H1 (cell line): ENCODE measurements at regions of chr1 and their contacts with region 1.

Region 1: DNA sequence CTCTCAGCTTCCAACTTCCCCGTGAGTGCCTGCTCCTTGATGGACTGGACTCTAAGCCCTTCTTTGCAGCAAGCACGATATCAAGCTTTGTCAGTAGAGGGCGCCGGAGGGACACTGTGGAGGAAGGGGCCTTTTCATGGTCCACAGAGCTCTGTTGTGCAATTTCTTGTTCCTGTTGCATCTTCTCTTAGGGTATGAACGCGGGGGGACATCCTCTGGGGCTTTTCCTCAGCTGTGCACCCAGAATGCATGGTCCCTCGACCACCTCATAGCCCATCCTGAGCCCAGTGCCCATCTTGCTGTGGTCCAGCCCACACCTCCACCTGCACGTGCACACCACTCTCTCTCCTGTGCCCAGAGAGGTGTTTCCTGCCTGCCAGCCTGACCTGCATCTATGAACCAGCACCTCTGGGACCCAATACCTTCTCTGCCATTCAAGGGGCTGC is 556.8 kb downstream of the PTPRU start:
- DNase-seq: peak; percentile 62 to 98
- H3K4me3 ChIP-seq: no peak overlapping the region
- H3K27ac ChIP-seq: peak overlapping the region; percentile 48
- H3K4me1 ChIP-seq: no peaks in the 10 kb centered on the region; a peak in 2 of 7 replicates
- H3K27me3 ChIP-seq: no peaks in the 10 kb centered on the region
- CTCF ChIP-seq: peak; percentile 79 to 94 (median 93)
- EP300 ChIP-seq: no peak
- POLR2A ChIP-seq: no peak
- RAD21 ChIP-seq: peak; percentile 96 to 97

Region 2: DNA sequence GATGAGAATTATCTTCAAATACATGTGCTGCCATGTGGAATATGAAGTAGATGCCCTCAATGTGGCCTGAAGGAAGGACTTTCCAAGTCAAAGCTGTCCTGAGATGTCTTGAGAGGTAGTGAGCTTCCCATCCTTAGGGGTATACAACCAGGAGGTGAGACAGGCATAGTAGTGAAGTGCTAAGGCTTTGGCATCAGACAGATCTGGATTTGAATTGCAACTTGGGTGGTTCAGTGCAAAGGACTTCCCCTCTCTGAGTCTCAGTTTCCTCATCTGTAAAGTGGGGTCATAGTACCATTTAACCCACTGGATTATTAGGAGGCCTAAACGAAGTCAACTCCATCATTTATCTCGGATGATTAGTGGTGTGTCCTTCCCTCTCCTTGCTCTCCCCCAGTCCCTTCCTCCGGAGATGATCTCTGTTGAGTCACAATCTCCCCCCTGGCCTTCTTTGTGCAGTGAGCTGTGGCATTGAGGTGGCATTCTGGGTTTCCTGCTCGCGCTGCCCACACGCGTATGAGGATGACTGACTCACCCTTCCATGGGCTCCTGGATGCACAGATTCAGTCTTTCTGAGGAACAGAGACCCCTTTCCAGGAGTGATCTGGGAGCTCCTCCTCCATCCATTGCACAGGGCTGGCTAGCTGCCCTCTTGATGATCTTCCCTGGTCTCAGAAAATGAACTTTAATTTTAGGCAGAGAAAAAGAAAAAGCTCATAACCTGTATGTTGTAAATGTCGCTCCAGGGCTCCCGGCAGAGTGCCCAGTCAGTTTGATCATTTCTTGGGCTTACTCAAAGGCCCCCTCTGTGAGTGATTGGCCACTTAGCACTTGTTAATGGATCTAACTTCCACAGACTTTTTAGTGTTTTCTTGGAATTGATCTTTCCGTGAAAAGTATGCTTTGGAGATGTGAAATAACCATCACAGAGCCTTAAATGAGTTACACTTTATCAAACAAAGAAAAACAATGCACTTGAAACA is 202.2 kb before region 1 on chr1:
- CTCF ChIA-PET with region 1: no interaction called
- POLR2A ChIA-PET with region 1: no interaction called
- DNase-seq: no peak
- H3K4me3 ChIP-seq: no peak overlapping the region
- H3K27ac ChIP-seq: no peak overlapping the region
- H3K4me1 ChIP-seq: no peaks in the 10 kb centered on the region; a peak in 1 of 7 replicates
- H3K27me3 ChIP-seq: no peaks in the 10 kb centered on the region
- CTCF ChIP-seq: no peak
- EP300 ChIP-seq: no peak
- POLR2A ChIP-seq: no peak
- RAD21 ChIP-seq: no peak

Region 3: GRCh38 chr1:29805141-29805625 is 12.1 kb after region 1 on chr1:
- CTCF ChIA-PET with region 1: interaction called, 10 read pairs
- POLR2A ChIA-PET with region 1: no interaction called
- DNase-seq: peak in 1 of 2 experiments; percentile 39
- H3K4me3 ChIP-seq: no peak overlapping the region
- H3K27ac ChIP-seq: no peak overlapping the region; the same call in 1 of the 2 replicates
- H3K4me1 ChIP-seq: peaks cover 0 to 6% (median 2%) of the 10 kb centered on the region in 4 experiments; a peak in 3 of 7 replicates
- H3K27me3 ChIP-seq: no peaks in the 10 kb centered on the region
- CTCF ChIP-seq: peak; percentile 5 to 30 (median 15)
- EP300 ChIP-seq: no peak
- POLR2A ChIP-seq: no peak
- RAD21 ChIP-seq: peak; percentile 33 to 48; a peak in 3 of 4 replicates

Region 4: GRCh38 chr1:29849038-29849750 is 56.1 kb after region 1 on chr1:
- CTCF ChIA-PET with region 1: interaction called, 19 read pairs
- POLR2A ChIA-PET with region 1: no interaction called
- DNase-seq: peak; percentile 56 to 84
- H3K4me3 ChIP-seq: no peak overlapping the region
- H3K27ac ChIP-seq: no peak overlapping the region
- H3K4me1 ChIP-seq: no peaks in the 10 kb centered on the region
- H3K27me3 ChIP-seq: no peaks in the 10 kb centered on the region
- CTCF ChIP-seq: peak; percentile 18 to 86 (median 72)
- EP300 ChIP-seq: no peak
- POLR2A ChIP-seq: no peak
- RAD21 ChIP-seq: peak; percentile 64 to 80

Region 5: DNA sequence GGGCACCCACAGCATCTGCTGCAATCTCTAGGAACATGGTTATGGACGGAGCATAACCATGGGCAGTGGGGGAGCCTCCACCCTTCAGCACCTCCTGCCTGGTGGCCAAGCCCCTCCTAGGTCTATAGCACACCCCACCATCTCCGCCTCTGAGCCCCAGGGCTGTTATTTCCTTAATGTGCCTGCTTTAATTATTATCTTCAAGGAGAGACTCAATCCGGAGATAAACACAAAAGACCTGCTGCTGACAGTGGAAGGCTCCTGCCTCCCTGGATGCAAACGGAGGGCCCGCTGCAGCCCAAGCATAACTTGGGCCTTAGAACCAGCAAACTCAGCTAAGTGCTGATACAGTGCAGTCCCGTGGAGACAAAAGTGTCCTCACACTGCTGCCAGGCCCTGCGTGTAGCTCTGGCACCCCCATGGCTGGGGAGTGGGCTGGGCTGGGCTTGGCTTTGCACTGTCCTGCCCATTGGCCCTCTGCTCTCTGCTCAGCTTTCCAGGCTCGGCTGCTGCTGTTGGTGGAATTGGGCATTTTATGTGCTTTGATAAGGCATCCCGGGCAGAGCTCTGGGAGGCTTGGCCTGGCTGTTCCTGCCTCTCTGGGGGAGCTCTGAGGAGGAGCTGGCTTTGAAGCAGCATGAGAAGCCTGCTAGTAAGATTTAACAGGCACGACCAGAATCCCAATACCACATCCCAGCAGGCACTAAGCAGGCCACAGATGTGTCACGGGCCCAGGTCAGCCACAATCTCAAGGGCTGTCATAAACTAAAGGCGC is 63.4 kb after region 1 on chr1:
- CTCF ChIA-PET with region 1: interaction called, 14 read pairs
- POLR2A ChIA-PET with region 1: interaction called, 3 read pairs
- DNase-seq: no peak
- H3K4me3 ChIP-seq: no peak overlapping the region
- H3K27ac ChIP-seq: no peak overlapping the region
- H3K4me1 ChIP-seq: peaks cover 0 to 2% (median 0%) of the 10 kb centered on the region in 4 experiments; a peak in 2 of 7 replicates
- H3K27me3 ChIP-seq: no peaks in the 10 kb centered on the region
- CTCF ChIP-seq: no peak
- EP300 ChIP-seq: no peak
- POLR2A ChIP-seq: no peak
- RAD21 ChIP-seq: no peak

Region 6: DNA sequence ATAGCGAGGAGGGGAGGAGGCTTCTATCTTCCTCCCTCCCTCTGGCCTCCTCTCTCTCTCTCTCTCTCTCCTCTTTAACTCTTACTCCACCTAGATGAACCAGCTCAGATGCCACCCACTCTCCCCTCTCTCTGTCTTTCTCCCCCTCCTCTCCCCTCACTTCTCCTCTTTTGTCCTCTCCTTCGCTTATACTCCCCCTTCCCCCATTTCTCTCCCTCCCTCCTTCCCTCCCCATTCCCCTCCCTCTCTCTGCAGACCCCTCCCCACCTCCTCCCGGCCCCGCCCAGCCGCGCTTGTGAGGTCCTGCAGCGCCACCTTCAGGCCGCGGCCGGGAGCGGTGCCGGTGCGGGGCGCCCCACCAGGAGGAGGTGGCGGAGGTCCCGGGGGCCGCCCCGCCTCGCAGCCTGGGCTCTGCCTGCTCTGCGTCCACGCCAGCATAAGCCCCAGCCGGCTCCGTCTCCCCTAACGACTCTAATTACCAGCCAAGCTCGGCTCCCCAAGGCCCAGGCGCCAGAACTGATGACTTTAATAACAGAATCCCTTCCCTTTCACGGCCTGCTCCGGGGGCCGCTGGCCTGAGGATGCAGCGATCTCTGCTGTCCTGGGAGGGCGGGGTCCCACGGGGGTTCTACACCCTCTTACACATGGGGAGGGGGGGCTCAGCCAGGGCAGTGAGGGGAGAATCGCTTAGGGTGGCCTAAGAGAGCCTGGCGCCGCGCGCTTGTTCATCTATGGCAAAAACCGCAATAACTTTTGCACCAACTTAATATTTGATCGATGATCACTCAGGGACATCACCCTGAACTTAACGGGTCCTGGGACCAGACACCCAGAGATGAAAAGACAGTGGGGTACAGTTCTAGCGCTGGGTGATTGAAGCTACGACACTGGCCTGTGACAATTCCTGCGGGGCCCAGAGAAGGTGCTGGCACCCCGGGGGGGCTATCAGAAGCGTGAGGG is 293.0 kb after region 1 on chr1:
- CTCF ChIA-PET with region 1: interaction called, 24 read pairs
- POLR2A ChIA-PET with region 1: no interaction called
- DNase-seq: peak; percentile 57 to 98
- H3K4me3 ChIP-seq: peak overlapping the region in 3 of 4 experiments; percentile 9 to 53 (median 19); a peak in 4 of 8 replicates
- H3K27ac ChIP-seq: no peak overlapping the region
- H3K4me1 ChIP-seq: peaks cover 0 to 10% (median 3%) of the 10 kb centered on the region in 4 experiments; a peak in 5 of 7 replicates
- H3K27me3 ChIP-seq: no peaks in the 10 kb centered on the region; a peak in 1 of 7 replicates
- CTCF ChIP-seq: peak; percentile 67 to 92 (median 77)
- EP300 ChIP-seq: no peak
- POLR2A ChIP-seq: no peak
- RAD21 ChIP-seq: peak; percentile 88 to 90

Region 7: GRCh38 chr1:30106125-30106524 is 313.0 kb after region 1 on chr1:
- CTCF ChIA-PET with region 1: interaction called, 17 read pairs
- POLR2A ChIA-PET with region 1: no interaction called
- DNase-seq: peak; percentile 47 to 87
- H3K4me3 ChIP-seq: no peak overlapping the region
- H3K27ac ChIP-seq: no peak overlapping the region
- H3K4me1 ChIP-seq: peaks cover 0 to 3% (median 0%) of the 10 kb centered on the region in 4 experiments; a peak in 1 of 7 replicates
- H3K27me3 ChIP-seq: no peaks in the 10 kb centered on the region
- CTCF ChIP-seq: peak; percentile 87 to 97 (median 95)
- EP300 ChIP-seq: no peak
- POLR2A ChIP-seq: no peak
- RAD21 ChIP-seq: peak; percentile 82 to 85

Region 8: GRCh38 chr1:30111431-30111830 is 318.3 kb after region 1 on chr1:
- CTCF ChIA-PET with region 1: interaction called, 17 read pairs
- POLR2A ChIA-PET with region 1: no interaction called
- DNase-seq: peak; percentile 34 to 77
- H3K4me3 ChIP-seq: peak overlapping the region in 1 of 4 experiments; percentile 33; a peak in 1 of 8 replicates
- H3K27ac ChIP-seq: no peak overlapping the region
- H3K4me1 ChIP-seq: no peaks in the 10 kb centered on the region
- H3K27me3 ChIP-seq: no peaks in the 10 kb centered on the region
- CTCF ChIP-seq: peak; percentile 79 to 85 (median 80)
- EP300 ChIP-seq: no peak
- POLR2A ChIP-seq: no peak
- RAD21 ChIP-seq: peak; percentile 88